Caco-2 (cell line): ENCODE measurements at regions of chr11 and their contacts with region 1.

Region 1: GRCh38 chr11:95764267-95764898 is 25.2 kb downstream of the FAM76B start:
- DNase-seq: peak in 1 of 2 experiments; percentile 56
- H3K4me3 ChIP-seq: no peak overlapping the region
- H3K4me3 Mint-ChIP-seq: no peak overlapping the region
- H3K27ac Mint-ChIP-seq: no peak overlapping the region
- H3K4me1 ChIP-seq: peaks cover 7% of the 10 kb centered on the region; the same call in 1 of the 2 replicates
- H3K4me1 Mint-ChIP-seq: peaks cover 6% of the 10 kb centered on the region
- H3K27me3 ChIP-seq: no peaks in the 10 kb centered on the region
- H3K27me3 Mint-ChIP-seq: peaks cover 8% of the 10 kb centered on the region
- CTCF ChIP-seq: peak; percentile 56 to 91

Region 2: DNA sequence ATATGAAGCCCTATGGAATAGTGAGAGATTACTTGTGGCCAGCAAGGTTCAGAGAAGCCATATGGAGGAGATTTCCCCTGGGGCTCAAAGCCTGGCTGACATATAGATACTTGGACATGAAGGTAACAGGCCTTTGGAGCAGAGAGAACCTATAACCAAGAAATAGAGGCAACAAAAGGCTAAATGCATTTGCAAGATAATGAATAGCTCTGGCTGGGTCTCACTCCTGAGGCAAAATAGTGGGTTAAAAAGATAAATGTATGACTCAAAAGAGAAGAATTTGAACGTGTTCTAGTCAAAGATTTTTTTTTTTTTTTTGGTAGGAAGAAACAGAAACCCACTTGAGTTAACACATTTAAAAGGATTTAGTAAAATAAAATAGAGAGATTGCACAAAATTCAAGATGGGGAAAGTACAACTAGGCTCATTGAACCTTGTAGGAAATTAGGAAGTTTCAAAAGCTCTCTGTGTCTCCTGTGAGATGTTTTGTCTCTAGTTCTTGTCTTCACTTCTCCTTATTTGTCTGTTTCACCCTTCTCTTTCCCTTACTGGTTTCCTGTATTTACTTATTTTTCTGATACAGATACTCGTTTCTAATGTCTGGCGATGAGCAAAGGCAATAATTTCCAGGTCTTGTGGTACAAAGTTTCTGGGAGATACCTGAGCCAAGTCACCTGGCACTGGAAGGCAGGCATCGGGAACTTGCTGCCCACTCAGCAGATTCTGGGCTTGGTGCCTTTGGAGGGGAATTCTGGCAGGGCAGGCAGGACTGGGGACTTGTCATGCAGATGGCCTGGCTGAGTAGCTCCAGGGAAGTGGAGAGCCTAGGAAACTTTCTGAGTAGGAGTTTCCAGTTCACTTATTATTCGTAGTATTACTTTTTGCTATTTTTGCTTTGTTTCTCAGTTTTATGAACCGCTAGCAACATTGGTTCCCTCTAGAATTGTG is 484.2 kb before region 1 on chr11:
- CTCF ChIA-PET with region 1: no interaction called
- POLR2A ChIA-PET with region 1: no interaction called
- intact Hi-C with region 1: loop called (anchors 10 kb)
- DNase-seq: no peak
- H3K4me3 ChIP-seq: no peak overlapping the region
- H3K4me3 Mint-ChIP-seq: peak overlapping the region; percentile 31
- H3K27ac Mint-ChIP-seq: peak overlapping the region; percentile 83
- H3K4me1 ChIP-seq: peaks cover 68% of the 10 kb centered on the region
- H3K4me1 Mint-ChIP-seq: peaks cover 52% of the 10 kb centered on the region
- H3K27me3 ChIP-seq: no peaks in the 10 kb centered on the region
- H3K27me3 Mint-ChIP-seq: no peaks in the 10 kb centered on the region
- CTCF ChIP-seq: no peak

Region 3: DNA sequence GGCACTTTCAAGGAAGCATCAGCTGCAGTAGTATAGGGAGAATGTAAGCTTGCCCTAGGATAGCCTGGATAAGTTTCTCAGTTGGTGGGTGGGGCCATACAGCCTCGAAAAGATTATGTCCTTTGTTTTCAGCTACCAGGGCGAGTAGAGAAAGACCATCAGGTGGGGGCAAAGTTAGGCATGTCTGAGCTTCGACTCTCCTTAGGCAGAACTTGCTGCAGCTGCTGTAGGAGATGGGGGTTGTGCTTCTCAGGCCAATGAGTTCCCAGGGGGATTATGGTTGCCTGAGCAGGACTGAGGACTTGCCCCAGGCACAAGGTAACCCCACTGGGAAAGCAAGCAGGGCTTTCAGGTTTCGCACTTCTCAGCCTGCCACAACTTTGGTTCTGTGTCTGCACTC is 360.1 kb before region 1 on chr11:
- CTCF ChIA-PET with region 1: no interaction called
- POLR2A ChIA-PET with region 1: no interaction called
- intact Hi-C with region 1: loop called (anchors 1 kb)
- DNase-seq: peak in 1 of 2 experiments; percentile 18
- H3K4me3 ChIP-seq: no peak overlapping the region
- H3K4me3 Mint-ChIP-seq: no peak overlapping the region
- H3K27ac Mint-ChIP-seq: no peak overlapping the region
- H3K4me1 ChIP-seq: no peaks in the 10 kb centered on the region
- H3K4me1 Mint-ChIP-seq: no peaks in the 10 kb centered on the region
- H3K27me3 ChIP-seq: no peaks in the 10 kb centered on the region
- H3K27me3 Mint-ChIP-seq: no peaks in the 10 kb centered on the region
- CTCF ChIP-seq: peak; percentile 11 to 22

Region 4: GRCh38 chr11:95641495-95641894 is 122.9 kb before region 1 on chr11:
- CTCF ChIA-PET with region 1: no interaction called
- POLR2A ChIA-PET with region 1: no interaction called
- intact Hi-C with region 1: loop called (anchors 1 kb)
- DNase-seq: no peak
- H3K4me3 ChIP-seq: no peak overlapping the region
- H3K4me3 Mint-ChIP-seq: no peak overlapping the region
- H3K27ac Mint-ChIP-seq: no peak overlapping the region
- H3K4me1 ChIP-seq: no peaks in the 10 kb centered on the region
- H3K4me1 Mint-ChIP-seq: no peaks in the 10 kb centered on the region
- H3K27me3 ChIP-seq: 0 out of 2 replicates have a peak, but pooled peaks cover 1% of the 10 kb centered on the region
- H3K27me3 Mint-ChIP-seq: peaks cover 7% of the 10 kb centered on the region
- CTCF ChIP-seq: no peak

Region 5: DNA sequence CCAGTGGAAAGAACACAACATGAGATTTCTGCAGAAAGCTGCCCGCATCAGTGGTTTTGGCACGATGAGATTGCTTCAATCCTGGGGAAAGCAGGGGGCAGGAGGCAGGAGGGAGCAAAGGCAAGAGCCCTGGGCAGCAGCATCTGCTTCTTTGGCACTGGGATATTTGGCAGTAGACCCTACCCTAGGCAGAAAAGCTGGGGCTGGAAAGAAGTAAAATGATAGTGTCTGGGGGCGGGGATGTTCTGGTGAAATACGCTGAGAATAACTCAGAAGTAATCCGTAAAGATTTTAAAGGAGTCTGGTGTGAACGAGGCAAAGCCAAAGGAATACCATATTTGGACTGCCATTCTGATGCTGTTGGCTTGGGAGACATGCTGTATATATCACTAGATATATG is 36.8 kb before region 1 on chr11:
- CTCF ChIA-PET with region 1: no interaction called
- POLR2A ChIA-PET with region 1: no interaction called
- intact Hi-C with region 1: no loop called
- DNase-seq: no peak
- H3K4me3 ChIP-seq: no peak overlapping the region
- H3K4me3 Mint-ChIP-seq: no peak overlapping the region
- H3K27ac Mint-ChIP-seq: no peak overlapping the region
- H3K4me1 ChIP-seq: no peaks in the 10 kb centered on the region
- H3K4me1 Mint-ChIP-seq: no peaks in the 10 kb centered on the region
- H3K27me3 ChIP-seq: no peaks in the 10 kb centered on the region
- H3K27me3 Mint-ChIP-seq: peaks cover 16% of the 10 kb centered on the region
- CTCF ChIP-seq: no peak

Region 6: DNA sequence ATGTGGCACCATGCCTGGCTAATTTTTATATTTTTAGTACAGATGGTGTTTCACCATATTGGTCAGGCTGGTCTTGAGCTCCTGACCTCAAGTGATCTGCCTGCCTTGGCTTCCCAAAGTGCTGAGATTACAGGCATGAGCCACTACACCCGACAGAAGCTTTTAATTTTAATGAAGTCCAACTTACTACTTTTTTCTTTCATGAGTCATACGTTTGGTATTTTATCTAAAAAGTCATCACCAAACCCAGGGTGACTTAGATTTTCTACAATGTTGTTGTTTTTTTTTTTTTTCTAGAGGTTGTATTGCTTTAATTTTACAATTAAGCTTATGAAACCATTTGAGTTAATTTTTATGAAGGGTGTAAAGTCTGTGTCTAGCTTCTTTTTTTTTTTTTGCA is 660.3 kb after region 1 on chr11:
- CTCF ChIA-PET with region 1: no interaction called
- POLR2A ChIA-PET with region 1: no interaction called
- intact Hi-C with region 1: loop called (anchors 2 kb)
- DNase-seq: no peak
- H3K4me3 ChIP-seq: no peak overlapping the region
- H3K4me3 Mint-ChIP-seq: no peak overlapping the region
- H3K27ac Mint-ChIP-seq: no peak overlapping the region
- H3K4me1 ChIP-seq: peaks cover 5% of the 10 kb centered on the region; the same call in 1 of the 2 replicates
- H3K4me1 Mint-ChIP-seq: no peaks in the 10 kb centered on the region
- H3K27me3 ChIP-seq: no peaks in the 10 kb centered on the region; the same call in 1 of the 2 replicates
- H3K27me3 Mint-ChIP-seq: peaks cover 19% of the 10 kb centered on the region
- CTCF ChIP-seq: no peak